ENCODE measurements at regions of chr20 and their contacts with region 1.

Region 1: GRCh38 chr20:58888521-58889333 is 36.2 kb downstream of the GNAS start:
- DNase-seq: peak; percentile 83 to 91 (median 91)
- H3K4me3 ChIP-seq: peak overlapping the region; percentile 64 to 88 (median 80)
- H3K27ac ChIP-seq: peak overlapping the region in 1 of 2 experiments; percentile 76
- H3K4me1 ChIP-seq: peaks cover 9 to 29% (median 24%) of the 10 kb centered on the region in 4 experiments
- H3K27me3 ChIP-seq: no peaks in the 10 kb centered on the region

Region 2: GRCh38 chr20:58623826-58624473 is 264.8 kb before region 1 on chr20:
- CTCF ChIA-PET with region 1: no interaction called
- POLR2A ChIA-PET with region 1: no interaction called
- DNase-seq: no peak
- H3K4me3 ChIP-seq: no peak overlapping the region
- H3K27ac ChIP-seq: no peak overlapping the region
- H3K4me1 ChIP-seq: peaks cover 0 to 4% (median 0%) of the 10 kb centered on the region in 4 experiments
- H3K27me3 ChIP-seq: peaks cover 0 to 22% (median 6%) of the 10 kb centered on the region in 5 experiments

Region 3: GRCh38 chr20:58907399-58908137 is 18.8 kb after region 1 on chr20:
- CTCF ChIA-PET with region 1: interaction called, 3 read pairs
- POLR2A ChIA-PET with region 1: interaction called, 11 read pairs
- DNase-seq: peak; percentile 92 to 98 (median 97)
- H3K4me3 ChIP-seq: peak overlapping the region in 6 of 7 experiments; percentile 12 to 66 (median 39)
- H3K27ac ChIP-seq: peak overlapping the region; percentile 67 to 75
- H3K4me1 ChIP-seq: peaks cover 23 to 32% (median 30%) of the 10 kb centered on the region in 4 experiments
- H3K27me3 ChIP-seq: no peaks in the 10 kb centered on the region